CD4-positive, alpha-beta T cell (primary cell): ENCODE measurements at regions of chr7 and their contacts with region 1.

Region 1: GRCh38 chr7:50166997-50167965 is 74.2 kb upstream of the ZPBP start:
- DNase-seq: peak in 9 of 14 experiments; percentile 7 to 63 (median 38)
- ATAC-seq: peak; percentile 83
- H3K4me3 ChIP-seq: no peak overlapping the region
- H3K4me3 Mint-ChIP-seq: peak overlapping the region; percentile 36
- H3K27ac ChIP-seq: peak overlapping the region; percentile 14 to 60
- H3K27ac Mint-ChIP-seq: peak overlapping the region; percentile 85
- H3K4me1 ChIP-seq: peaks cover 50% of the 10 kb centered on the region
- H3K4me1 Mint-ChIP-seq: peaks cover 63% of the 10 kb centered on the region
- H3K27me3 ChIP-seq: no peaks in the 10 kb centered on the region
- H3K27me3 Mint-ChIP-seq: no peaks in the 10 kb centered on the region
- CTCF ChIP-seq: no peak

Region 2: DNA sequence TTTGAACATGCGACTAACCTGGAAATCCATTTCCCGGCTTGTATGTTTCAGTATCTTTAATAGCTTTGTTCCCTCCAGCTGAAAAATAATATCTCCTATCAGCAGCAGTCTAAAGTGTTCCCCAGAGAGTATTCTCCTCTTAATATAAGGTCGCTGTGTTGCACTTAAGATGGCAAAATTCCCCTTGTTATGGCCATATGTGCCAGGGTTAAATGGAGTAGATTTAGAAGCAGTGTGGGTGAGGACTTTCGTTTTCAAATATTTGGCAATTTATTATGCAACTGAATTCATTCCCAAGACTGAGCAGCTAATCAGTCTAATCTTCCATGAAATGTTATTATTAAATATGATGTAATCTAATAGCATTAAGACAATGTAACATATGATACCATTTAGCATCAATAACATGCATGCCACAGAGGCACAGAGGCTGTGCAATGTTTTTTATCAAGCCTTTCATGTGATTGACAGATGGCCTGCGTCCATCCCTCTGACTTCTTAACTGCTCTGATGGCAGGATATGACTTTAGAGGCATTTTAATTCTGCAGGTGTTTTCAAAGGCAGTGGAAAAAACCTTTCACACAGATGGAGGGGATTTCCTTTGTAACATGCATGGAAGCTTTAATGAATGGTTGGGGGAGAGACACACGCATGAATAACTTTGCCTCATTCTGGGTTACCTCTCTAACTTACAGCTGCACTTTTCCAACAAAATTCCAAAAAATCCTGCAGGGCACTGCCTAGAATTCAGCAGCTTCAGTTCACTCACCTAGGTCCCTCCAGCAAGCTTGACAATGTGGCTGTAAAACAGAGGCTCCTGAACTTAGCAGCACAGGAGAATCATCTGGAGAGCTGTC is 19.1 kb before region 1 on chr7:
- CTCF ChIA-PET with region 1: interaction called, 4 read pairs
- POLR2A ChIA-PET with region 1: interaction called, 16 read pairs
- intact Hi-C with region 1: loop called in 1 of 2 experiments (anchors 2 kb)
- DNase-seq: peak in 6 of 14 experiments; percentile 19 to 85 (median 54)
- ATAC-seq: peak; percentile 86
- H3K4me3 ChIP-seq: no peak overlapping the region
- H3K4me3 Mint-ChIP-seq: peak overlapping the region; percentile 14
- H3K27ac ChIP-seq: peak overlapping the region; percentile 23 to 45
- H3K27ac Mint-ChIP-seq: peak overlapping the region; percentile 81
- H3K4me1 ChIP-seq: peaks cover 36% of the 10 kb centered on the region
- H3K4me1 Mint-ChIP-seq: peaks cover 67% of the 10 kb centered on the region
- H3K27me3 ChIP-seq: no peaks in the 10 kb centered on the region
- H3K27me3 Mint-ChIP-seq: no peaks in the 10 kb centered on the region
- CTCF ChIP-seq: no peak

Region 3: GRCh38 chr7:50156706-50157105 is 10.6 kb before region 1 on chr7:
- CTCF ChIA-PET with region 1: interaction called, 4 read pairs
- POLR2A ChIA-PET with region 1: interaction called, 15 read pairs
- intact Hi-C with region 1: no loop called
- DNase-seq: peak in 1 of 14 experiments; percentile 11
- ATAC-seq: peak; percentile 17
- H3K4me3 ChIP-seq: no peak overlapping the region
- H3K4me3 Mint-ChIP-seq: peak overlapping the region; percentile 40
- H3K27ac ChIP-seq: no peak overlapping the region
- H3K27ac Mint-ChIP-seq: peak overlapping the region; percentile 73
- H3K4me1 ChIP-seq: peaks cover 17% of the 10 kb centered on the region
- H3K4me1 Mint-ChIP-seq: peaks cover 22% of the 10 kb centered on the region
- H3K27me3 ChIP-seq: no peaks in the 10 kb centered on the region
- H3K27me3 Mint-ChIP-seq: no peaks in the 10 kb centered on the region
- CTCF ChIP-seq: no peak

Region 4: GRCh38 chr7:50641442-50642405 is 474.4 kb after region 1 on chr7:
- CTCF ChIA-PET with region 1: no interaction called
- POLR2A ChIA-PET with region 1: no interaction called
- intact Hi-C with region 1: no loop called
- DNase-seq: peak in 1 of 14 experiments; percentile 14
- ATAC-seq: no peak
- H3K4me3 ChIP-seq: no peak overlapping the region
- H3K4me3 Mint-ChIP-seq: no peak overlapping the region
- H3K27ac ChIP-seq: no peak overlapping the region
- H3K27ac Mint-ChIP-seq: no peak overlapping the region
- H3K4me1 ChIP-seq: no peaks in the 10 kb centered on the region
- H3K4me1 Mint-ChIP-seq: no peaks in the 10 kb centered on the region
- H3K27me3 ChIP-seq: no peaks in the 10 kb centered on the region
- H3K27me3 Mint-ChIP-seq: no peaks in the 10 kb centered on the region
- CTCF ChIP-seq: no peak